Left cardiac atrium (tissue), 4 donors: ENCODE measurements at regions of chr12 and their contacts with region 1.

Region 1: DNA sequence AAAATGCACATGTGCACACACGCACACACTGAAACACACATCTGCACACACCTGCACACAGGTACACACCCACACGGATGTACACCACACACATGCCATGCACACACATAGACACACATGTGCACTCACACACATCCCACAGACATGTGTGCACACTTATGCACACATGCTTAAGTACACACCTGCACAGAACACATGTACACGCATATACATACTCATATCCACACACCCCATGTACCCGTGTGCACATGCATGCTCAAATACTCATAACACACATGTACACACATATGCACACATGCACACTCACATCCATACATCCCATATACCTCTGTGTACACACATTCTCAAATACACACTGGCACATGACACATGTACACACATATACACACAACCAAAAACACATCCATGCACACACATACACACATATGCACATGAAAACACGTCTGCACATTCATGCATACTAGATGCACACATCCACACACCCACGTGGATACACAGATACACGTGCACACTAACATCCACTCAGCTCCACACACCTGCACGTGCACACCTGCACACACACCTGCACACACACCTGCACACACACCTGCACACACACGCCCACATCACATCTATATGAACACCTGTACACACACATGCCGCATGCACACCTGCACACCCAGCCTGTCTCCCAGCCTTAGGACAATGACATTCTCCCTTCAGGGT is 336.7 kb downstream of the ADGRD1 start:
- DNase-seq: no peak
- ATAC-seq: no peak

Region 2: GRCh38 chr12:131673888-131674257 is 383.5 kb after region 1 on chr12:
- intact Hi-C with region 1: loop called in 1 of 2 experiments (anchors 5 kb)
- DNase-seq: no peak
- ATAC-seq: peak in 1 of 2 donors; percentile 37